ENCODE measurements at regions of chr2 and their contacts with region 1.

Region 1: DNA sequence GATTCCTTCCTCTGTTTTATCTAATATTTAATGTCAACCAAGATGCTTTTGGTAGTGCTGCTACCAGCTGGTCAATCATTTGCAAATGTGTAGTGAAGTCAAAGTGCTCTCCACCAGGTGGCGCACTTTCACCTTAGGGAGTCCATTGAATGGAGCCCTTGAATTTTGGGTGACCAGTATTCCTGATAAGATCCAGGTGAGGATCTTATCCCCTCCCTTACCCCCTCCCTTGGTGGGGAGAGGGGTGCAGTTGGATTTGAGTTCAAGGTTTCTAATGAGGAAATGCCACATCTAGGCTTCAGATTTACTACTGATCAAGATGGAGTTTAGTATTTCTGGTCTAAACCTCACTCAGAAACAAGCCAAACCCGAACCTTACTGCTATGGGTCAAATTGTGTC is 12.0 kb upstream of the E2F6 start:
- DNase-seq: peak; percentile 91
- H3K4me3 ChIP-seq: no peak overlapping the region
- H3K27ac ChIP-seq: no peak overlapping the region
- H3K4me1 ChIP-seq: peaks cover 0 to 7% (median 4%) of the 10 kb centered on the region in 4 donors
- H3K27me3 ChIP-seq: peaks cover 42% of the 10 kb centered on the region
- CTCF ChIP-seq: peak; percentile 82 to 93 (median 88)
- EP300 ChIP-seq: no peak
- POLR2A ChIP-seq: no peak

Region 2: GRCh38 chr2:11574176-11575030 is 96.4 kb after region 1 on chr2:
- in situ Hi-C with region 1: loop called in 1 of 4 experiments (anchors 5 kb)
- intact Hi-C with region 1: no loop called
- DNase-seq: no peak
- H3K4me3 ChIP-seq: no peak overlapping the region
- H3K27ac ChIP-seq: peak overlapping the region in 1 of 4 donors; percentile 4
- H3K4me1 ChIP-seq: no peaks in the 10 kb centered on the region
- H3K27me3 ChIP-seq: no peaks in the 10 kb centered on the region
- CTCF ChIP-seq: no peak
- EP300 ChIP-seq: no peak
- POLR2A ChIP-seq: no peak

Region 3: DNA sequence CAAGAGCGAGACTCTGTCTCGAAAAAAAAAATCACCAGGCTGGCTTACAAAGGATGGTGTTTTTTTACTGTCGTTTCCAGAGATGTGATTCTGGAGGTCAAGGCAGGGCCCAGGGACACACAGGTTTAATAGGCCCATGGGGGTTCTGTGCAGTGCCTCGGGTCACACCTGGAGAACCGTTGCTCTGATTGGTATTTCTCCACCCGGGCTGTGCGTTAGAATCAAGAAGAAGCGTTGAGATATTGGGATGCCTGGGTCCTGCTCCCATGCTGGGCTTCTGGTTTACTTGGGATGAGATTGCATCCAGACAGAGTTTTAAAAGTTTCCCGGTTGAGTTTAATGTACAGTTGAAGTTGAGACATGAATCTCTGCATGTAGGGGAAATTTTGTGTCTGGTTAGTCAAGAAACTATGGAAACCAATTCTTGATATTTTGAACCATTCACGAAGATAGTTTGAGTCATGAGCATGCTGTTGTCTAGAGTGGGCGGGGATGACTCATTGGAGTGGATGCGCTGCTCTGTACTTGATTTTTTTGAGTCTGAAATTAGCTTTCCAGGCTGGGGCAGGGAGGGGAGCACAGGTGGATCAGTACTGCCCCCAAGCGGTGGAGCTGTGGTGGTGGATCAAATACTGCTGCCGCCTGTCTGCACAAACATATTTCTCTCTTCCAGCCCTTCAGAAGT is 106.0 kb after region 1 on chr2:
- in situ Hi-C with region 1: loop called (anchors 5 to 10 kb)
- intact Hi-C with region 1: loop called (anchors 5 kb)
- DNase-seq: peak; percentile 66
- H3K4me3 ChIP-seq: no peak overlapping the region
- H3K27ac ChIP-seq: peak overlapping the region; percentile 15 to 53 (median 33)
- H3K4me1 ChIP-seq: peaks cover 0 to 10% (median 3%) of the 10 kb centered on the region in 4 donors
- H3K27me3 ChIP-seq: no peaks in the 10 kb centered on the region
- CTCF ChIP-seq: peak; percentile 69 to 76 (median 72)
- EP300 ChIP-seq: no peak
- POLR2A ChIP-seq: no peak

Measured in transverse colon (tissue), 4 donors.